ENCODE measurements at regions of chr13 and their contacts with region 1.

Region 1: GRCh38 chr13:30355384-30355699 is 48.0 kb upstream of the KATNAL1 start:
- DNase-seq: peak in 1 of 2 donors; percentile 37
- ATAC-seq: peak in 7 of 8 donors; percentile 63 to 87 (median 79)
- H3K4me3 ChIP-seq: no peak overlapping the region
- H3K27ac ChIP-seq: no peak overlapping the region
- H3K4me1 ChIP-seq: peaks cover 0 to 11% (median 0%) of the 10 kb centered on the region in 9 donors
- H3K27me3 ChIP-seq: no peaks in the 10 kb centered on the region
- CTCF ChIP-seq: peak; percentile 20 to 69 (median 60)

Region 2: GRCh38 chr13:30408319-30409101 is 53.2 kb after region 1 on chr13:
- intact Hi-C with region 1: no loop called
- DNase-seq: peak; percentile 95 to 97
- ATAC-seq: peak; percentile 95 to 98 (median 96)
- H3K4me3 ChIP-seq: peak overlapping the region in 9 of 10 donors; percentile 23 to 56 (median 48)
- H3K27ac ChIP-seq: peak overlapping the region; percentile 27 to 92 (median 84)
- H3K4me1 ChIP-seq: peaks cover 0 to 28% (median 11%) of the 10 kb centered on the region in 9 donors
- H3K27me3 ChIP-seq: no peaks in the 10 kb centered on the region
- CTCF ChIP-seq: peak; percentile 71 to 83 (median 79)

Region 3: DNA sequence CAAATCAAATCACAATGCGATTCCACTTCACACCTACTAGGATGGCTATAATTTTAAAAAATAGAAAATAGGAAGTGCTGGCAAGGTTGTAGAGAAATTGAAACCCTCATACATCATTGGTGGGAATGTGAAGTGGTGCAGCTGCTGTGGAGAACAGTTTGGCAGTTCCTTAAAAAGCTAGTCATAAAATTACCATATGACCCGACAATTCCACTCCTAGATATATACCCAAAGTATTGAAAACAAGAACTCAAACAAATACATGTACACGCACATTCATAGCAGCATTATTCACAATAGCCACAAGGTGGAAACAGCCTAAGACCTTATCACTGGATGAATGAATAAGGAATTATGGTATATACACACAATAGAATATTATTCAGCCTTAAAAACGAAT is 98.4 kb after region 1 on chr13:
- intact Hi-C with region 1: loop called in 1 of 10 experiments (anchors 5 kb)
- DNase-seq: no peak
- ATAC-seq: no peak
- H3K4me3 ChIP-seq: no peak overlapping the region
- H3K27ac ChIP-seq: no peak overlapping the region
- H3K4me1 ChIP-seq: peaks cover 0 to 3% (median 0%) of the 10 kb centered on the region in 9 donors
- H3K27me3 ChIP-seq: no peaks in the 10 kb centered on the region
- CTCF ChIP-seq: peak in 2 of 9 donors; percentile 6 to 9

Region 4: DNA sequence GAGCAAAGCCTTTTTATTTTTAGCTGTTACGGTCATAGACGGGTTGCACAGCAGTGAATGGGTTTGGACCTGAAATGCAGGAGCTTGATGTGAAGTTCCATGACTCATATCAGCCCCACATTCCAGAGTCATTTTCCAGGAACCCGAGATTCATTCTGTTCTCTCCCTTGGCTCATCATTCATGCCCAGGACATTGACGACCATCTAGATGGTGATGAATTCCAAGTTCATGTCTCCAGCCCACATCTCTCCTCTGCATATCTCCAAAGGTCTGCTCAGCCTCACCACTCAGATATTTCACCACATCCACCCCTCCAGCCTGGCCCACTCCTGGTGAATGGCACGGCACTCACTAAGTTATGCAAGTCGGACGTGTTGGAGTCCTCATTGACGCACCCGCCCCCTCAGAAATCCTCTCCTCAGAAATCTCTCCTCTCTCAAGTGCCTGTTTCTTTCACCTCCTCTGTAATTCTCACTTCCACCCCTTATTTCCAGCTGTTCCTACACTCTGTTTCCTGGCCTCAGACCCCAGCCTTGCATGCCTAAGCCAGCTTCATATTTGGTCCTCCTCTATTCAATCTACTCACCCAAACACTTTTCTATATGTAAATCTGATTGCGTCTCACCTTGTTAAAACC is 463.1 kb after region 1 on chr13:
- intact Hi-C with region 1: no loop called
- DNase-seq: no peak
- ATAC-seq: peak in 6 of 8 donors; percentile 29 to 94 (median 60)
- H3K4me3 ChIP-seq: no peak overlapping the region
- H3K27ac ChIP-seq: peak overlapping the region in 1 of 10 donors; percentile 10
- H3K4me1 ChIP-seq: peaks cover 0 to 11% (median 0%) of the 10 kb centered on the region in 9 donors
- H3K27me3 ChIP-seq: peaks cover 0 to 4% (median 0%) of the 10 kb centered on the region in 7 donors
- CTCF ChIP-seq: no peak